ENCODE measurements at regions of chr16 and their contacts with region 1.

Region 1: DNA sequence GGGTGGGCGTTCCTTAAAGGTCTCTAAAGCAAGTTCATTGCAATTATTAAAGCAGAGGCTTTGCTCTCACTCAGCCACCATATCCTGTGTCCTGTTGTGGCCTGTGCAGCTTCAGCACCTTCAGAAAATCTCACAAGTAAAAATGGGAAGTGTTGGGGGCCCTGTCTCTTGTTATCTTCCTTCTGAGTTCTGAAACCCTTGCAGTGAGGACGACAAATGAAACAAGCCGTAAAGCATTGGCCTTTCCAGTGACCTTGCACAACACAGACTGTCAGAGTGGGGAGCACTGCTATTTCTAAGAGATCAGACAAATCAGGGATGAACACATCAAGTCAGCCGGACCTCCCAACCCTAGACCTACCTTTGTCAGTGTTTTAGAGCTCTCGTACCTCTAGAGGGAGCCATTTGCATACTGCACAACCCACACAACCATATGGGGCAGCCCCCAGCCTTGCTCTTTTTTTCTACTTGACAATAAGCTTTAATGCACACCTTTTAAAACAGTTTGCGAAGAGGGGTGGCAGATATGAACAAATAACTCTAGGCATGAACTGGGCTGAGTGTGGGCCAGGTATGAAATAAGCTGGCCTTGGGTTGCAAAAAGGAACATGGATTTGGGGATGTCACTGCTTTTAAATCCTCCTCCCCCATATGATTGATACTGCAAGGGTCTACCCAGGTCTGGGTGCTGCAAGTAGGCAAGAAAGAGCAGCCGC is 89.8 kb downstream of the KATNIP start:
- DNase-seq: no peak
- ATAC-seq: peak; percentile 88

Region 2: GRCh38 chr16:27779641-27780164 is 140.0 kb after region 1 on chr16:
- intact Hi-C with region 1: no loop called
- DNase-seq: peak; percentile 53
- ATAC-seq: no peak

Region 3: GRCh38 chr16:27867122-27868110 is 227.7 kb after region 1 on chr16:
- intact Hi-C with region 1: loop called (anchors 10 kb)
- DNase-seq: peak; percentile 68
- ATAC-seq: peak; percentile 87

Region 4: DNA sequence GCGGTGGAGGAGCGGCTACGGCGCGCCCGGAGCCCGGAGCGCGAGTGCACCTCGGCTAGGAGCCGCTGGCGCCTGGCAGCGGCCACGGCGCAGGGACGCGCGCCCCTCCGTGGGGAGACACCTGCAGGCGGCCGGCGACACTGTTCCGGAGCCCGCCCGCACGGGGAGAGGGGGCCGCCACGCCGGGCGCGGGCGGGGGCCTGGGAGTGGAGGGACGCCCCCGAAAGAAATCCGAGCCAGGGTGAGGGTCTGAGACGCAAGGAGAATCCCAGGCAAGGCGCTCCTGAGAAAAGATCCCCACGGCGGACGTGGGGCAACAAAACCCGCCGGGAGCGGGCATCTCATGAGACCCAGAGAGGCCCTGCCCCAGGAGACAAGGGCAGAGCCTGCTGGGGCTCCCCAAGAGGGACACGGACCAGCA is 423.9 kb after region 1 on chr16 and contains the start of gene GSG1L:
- intact Hi-C with region 1: loop called (anchors 10 kb)
- DNase-seq: no peak
- ATAC-seq: peak; percentile 74
- total RNA-seq, gene GSG1L: not detected